Cardiac septum (tissue), 1 donor: ENCODE measurements at regions of chr5 and their contacts with region 1.

Region 1: DNA sequence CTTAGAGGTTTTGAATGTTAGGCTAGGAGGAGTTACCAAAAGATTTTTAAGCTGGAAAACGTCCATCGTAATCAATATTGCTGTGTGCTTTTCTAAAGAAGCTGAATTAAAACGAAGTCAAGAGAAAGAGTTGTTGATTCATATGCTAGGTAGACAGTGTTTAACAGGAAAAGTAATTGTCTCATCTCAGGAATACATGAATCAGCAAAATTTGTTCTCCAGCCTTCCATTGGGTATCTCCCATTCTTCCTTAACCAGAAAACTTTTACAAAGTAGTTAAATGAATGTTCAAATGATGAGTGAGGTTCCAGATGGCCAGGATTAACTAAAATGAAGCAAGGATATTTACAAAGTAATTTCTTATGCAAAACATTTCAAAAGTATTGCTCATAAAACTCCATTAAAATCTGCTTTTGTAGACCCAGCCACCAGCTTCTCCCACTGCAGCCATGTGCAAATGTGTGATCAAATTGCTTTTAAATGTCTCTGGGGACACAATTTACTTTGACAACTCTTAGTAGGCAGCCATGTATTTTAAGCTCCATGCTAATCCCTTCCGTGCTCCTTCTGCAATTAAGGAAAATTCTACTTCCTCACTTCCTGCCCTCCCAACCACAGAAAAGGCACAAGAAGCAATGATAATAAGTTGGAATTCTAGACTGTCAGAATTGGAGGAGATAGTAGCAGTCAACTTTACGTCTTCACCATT is 121.2 kb downstream of the HTR4 start:
- DNase-seq: no peak

Region 2: GRCh38 chr5:148474025-148474511 is 59.0 kb before region 1 on chr5:
- intact Hi-C with region 1: no loop called
- DNase-seq: peak; percentile 81

Region 3: GRCh38 chr5:148653836-148654781 is 121.0 kb after region 1 on chr5 and contains the start of gene HTR4:
- intact Hi-C with region 1: no loop called
- DNase-seq: no peak
- total RNA-seq, gene HTR4: 0.70 TPM

Region 4: DNA sequence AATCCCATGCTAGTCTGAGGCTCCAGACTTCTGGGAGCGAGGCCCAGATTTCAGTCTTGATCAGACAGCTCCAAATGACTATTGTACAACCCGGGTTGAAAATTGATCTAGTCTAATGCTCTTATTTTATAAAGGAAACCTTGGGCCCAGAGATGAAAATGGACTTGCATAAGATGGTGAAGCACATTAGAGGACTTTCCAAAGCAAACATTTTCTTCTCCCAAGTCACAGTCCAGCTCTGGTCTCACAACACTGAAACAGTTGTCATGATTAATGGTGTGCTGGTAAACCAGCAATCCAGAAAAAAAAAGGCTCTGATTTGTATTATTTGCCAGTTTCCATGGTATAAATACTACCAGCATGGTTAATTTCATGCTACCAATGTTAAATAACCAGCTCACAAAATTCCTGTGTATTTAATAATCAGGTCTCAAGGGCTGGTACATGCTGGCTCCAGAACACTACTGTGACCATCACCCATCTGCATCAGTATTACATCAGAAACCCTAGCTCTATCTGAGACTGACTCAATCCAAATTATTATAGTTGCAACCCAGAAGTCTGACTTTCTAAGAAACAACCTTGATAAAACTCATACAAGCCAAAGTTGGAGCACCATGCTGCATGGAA is 575.6 kb after region 1 on chr5:
- intact Hi-C with region 1: loop called (anchors 5 kb)
- DNase-seq: no peak